ENCODE measurements at regions of chr15 and their contacts with region 1.

Region 1: DNA sequence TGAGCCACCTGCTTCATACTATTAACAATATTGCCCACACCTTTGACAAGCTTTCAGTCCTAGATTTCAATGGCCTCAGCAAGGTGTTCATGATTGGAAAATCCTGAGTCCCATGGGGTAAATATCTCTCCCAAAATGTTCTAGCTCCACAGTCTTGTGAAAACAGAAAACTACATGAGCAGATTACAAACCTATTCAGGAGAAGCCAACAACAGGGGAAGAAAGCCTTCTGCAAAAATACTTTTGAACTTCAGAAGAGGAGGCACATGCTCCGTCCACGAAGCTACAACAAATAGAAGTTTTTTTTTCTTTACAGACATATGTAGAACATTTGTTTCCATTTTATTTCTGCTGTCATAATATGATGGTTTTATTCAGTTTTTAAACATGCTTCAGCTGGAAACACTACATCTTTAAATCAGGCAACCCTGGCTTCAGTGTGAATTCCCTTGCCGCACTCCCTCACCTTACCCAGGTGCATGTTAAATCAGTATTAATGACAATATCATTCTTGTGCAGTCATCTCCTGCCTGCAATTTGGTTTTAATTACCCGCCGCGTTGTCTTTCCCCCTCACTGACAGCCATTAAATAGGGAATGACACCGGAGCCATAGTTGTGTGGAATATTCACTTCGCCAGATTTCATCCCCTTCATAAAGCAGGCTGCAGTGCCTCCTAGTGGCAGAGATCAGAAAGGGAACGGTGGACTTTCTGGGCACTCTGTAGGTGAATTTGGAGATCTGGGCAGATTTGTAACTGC is 725.5 kb upstream of the ARRDC4 start:
- DNase-seq: peak; percentile 30
- ATAC-seq: peak; percentile 90
- H3K4me3 ChIP-seq: no peak overlapping the region
- H3K27ac ChIP-seq: no peak overlapping the region
- H3K4me1 ChIP-seq: no peaks in the 10 kb centered on the region
- H3K27me3 ChIP-seq: no peaks in the 10 kb centered on the region
- CTCF ChIP-seq: peak; percentile 80
- EP300 ChIP-seq: no peak
- POLR2A ChIP-seq: no peak
- RAD21 ChIP-seq: peak; percentile 49

Region 2: DNA sequence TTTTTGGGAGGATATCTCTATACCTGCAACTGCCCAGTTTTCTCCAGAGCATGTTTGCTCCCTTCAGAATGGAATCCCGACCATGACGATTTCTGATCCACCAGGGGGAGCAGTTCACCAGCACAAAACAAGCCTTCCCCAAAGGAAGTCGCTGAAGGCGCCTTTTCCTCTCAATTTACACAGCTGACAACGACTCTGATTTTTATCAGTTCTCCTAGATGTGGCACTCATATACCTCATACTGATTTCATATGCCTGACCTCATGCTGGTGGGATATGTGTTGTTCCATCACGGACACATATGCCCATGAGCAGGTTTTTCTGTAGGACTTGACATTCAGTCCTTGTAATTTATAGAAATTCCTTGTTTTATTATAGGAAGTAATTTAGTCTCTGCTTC is 1975.5 kb before region 1 on chr15:
- CTCF ChIA-PET with region 1: interaction called, 14 read pairs
- POLR2A ChIA-PET with region 1: no interaction called
- in situ Hi-C with region 1: loop called (anchors 10 kb)
- intact Hi-C with region 1: loop called (anchors 1 kb)
- DNase-seq: peak; percentile 35
- ATAC-seq: peak; percentile 82
- H3K4me3 ChIP-seq: no peak overlapping the region
- H3K27ac ChIP-seq: no peak overlapping the region
- H3K4me1 ChIP-seq: no peaks in the 10 kb centered on the region
- H3K27me3 ChIP-seq: no peaks in the 10 kb centered on the region; a peak in 1 of 5 replicates
- CTCF ChIP-seq: peak; percentile 78
- EP300 ChIP-seq: no peak
- POLR2A ChIP-seq: no peak
- RAD21 ChIP-seq: 0 out of 2 replicates have a peak, but pooled peaks have one; percentile 21

Region 3: DNA sequence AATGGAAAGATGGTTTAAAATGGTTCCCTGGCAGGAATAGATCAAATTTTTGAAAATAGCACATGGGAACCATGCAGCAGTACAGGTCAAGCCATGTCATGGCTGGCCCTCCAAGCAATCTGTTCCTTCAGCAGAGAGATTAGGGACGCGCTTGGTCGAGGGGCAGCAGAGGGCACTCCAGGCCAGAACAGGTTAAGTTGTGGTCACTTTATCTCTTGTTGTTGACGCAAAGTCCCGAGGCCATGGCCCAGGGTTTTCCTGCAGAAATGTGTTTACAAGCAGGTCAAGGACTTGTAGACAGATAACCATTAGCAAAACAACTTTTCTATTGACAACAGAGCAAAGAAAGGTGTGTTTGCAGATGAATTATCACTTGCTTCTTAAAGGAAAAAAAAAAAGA is 1474.5 kb before region 1 on chr15:
- CTCF ChIA-PET with region 1: no interaction called
- POLR2A ChIA-PET with region 1: no interaction called
- in situ Hi-C with region 1: no loop called
- intact Hi-C with region 1: loop called (anchors 10 kb)
- DNase-seq: peak; percentile 30
- ATAC-seq: peak; percentile 94
- H3K4me3 ChIP-seq: no peak overlapping the region
- H3K27ac ChIP-seq: no peak overlapping the region
- H3K4me1 ChIP-seq: no peaks in the 10 kb centered on the region
- H3K27me3 ChIP-seq: no peaks in the 10 kb centered on the region
- CTCF ChIP-seq: peak; percentile 76
- EP300 ChIP-seq: peak in 1 of 2 experiments; percentile 23; a peak in 1 of 4 replicates
- POLR2A ChIP-seq: no peak
- RAD21 ChIP-seq: peak; percentile 35; the same call in 1 of the 2 replicates

Region 4: DNA sequence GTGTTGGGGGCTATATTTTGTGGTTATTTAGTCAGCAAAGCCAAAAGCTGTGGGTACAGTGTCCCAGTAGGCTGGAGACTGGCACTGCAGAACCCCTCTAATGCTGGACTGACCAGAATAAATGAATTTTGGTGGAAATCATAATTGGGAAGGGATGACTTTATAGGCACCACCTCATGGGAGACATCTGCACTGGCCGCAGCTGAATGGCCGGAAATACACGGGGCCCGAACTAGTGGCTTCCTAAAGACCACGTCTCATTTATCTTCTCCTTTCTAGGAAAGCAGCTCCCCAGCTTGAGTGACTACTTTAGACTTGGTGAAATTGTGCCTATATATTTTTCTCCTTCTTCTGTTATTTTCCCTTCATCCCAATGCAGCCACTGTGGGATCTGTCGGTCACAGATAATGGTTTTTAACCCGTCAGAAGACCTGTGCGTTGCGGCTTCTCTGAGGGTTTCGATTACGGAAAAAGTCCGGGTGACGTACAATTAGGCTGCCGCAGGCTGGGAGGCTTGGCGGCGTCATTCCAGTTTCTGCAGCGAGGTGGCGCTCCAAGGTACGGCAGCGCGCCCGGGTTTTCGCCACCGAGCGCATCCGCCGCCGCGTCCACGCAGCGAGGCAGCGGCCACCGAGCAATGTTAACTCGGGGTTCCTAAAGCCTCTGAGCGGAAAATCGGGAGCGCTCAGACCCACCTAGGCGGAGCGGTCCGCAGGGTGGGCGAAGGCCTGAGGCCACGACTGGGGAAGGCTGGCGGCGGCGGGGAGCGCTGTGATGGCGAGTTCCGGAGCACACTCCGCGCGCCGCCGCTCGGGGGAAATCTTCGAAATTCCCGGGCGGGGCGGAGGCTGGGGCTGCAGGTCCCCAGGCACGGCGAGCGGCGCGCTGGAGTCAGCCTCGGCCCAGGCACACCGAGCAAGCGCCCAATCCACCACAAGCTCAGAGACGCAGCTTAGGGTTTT is 878.3 kb before region 1 on chr15:
- CTCF ChIA-PET with region 1: interaction called, 5 read pairs
- POLR2A ChIA-PET with region 1: no interaction called
- in situ Hi-C with region 1: no loop called
- intact Hi-C with region 1: loop called (anchors 5 kb)
- DNase-seq: peak; percentile 54
- ATAC-seq: peak; percentile 78
- H3K4me3 ChIP-seq: peak overlapping the region; percentile 63 to 80 (median 70)
- H3K27ac ChIP-seq: no peak overlapping the region
- H3K4me1 ChIP-seq: peaks cover 26% of the 10 kb centered on the region
- H3K27me3 ChIP-seq: no peaks in the 10 kb centered on the region; a peak in 1 of 5 replicates
- CTCF ChIP-seq: peak; percentile 96
- EP300 ChIP-seq: no peak
- POLR2A ChIP-seq: no peak
- RAD21 ChIP-seq: peak; percentile 92

Region 5: DNA sequence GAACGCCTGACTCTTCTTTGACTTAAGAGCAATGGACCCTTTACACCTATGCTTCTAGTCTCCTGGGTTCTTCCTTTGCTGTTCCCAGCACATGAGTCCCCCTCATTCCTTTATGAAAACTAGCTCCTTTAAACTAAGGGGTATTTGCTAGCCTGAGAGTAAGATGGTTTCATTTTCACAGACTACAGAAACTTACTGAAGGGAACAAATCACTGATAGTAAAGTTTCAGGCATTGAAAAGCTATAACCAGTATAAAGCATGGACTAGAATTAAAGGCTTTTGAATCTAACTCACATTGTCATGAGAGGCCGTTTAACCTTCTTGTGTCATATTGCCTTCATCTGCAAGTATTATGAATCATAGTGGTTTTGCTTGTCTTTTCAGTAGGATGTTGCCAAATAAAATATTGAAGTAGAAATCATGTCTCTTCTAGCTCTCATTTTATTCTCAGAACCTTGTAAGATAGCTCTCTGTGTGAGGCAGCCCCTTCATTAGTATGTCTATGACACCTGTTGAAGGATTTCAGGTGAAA is 138.7 kb before region 1 on chr15:
- CTCF ChIA-PET with region 1: no interaction called
- POLR2A ChIA-PET with region 1: no interaction called
- in situ Hi-C with region 1: no loop called
- intact Hi-C with region 1: no loop called
- DNase-seq: no peak
- ATAC-seq: no peak
- H3K4me3 ChIP-seq: no peak overlapping the region
- H3K27ac ChIP-seq: no peak overlapping the region
- H3K4me1 ChIP-seq: no peaks in the 10 kb centered on the region
- H3K27me3 ChIP-seq: no peaks in the 10 kb centered on the region
- CTCF ChIP-seq: no peak
- EP300 ChIP-seq: no peak
- POLR2A ChIP-seq: no peak
- RAD21 ChIP-seq: no peak

Region 6: DNA sequence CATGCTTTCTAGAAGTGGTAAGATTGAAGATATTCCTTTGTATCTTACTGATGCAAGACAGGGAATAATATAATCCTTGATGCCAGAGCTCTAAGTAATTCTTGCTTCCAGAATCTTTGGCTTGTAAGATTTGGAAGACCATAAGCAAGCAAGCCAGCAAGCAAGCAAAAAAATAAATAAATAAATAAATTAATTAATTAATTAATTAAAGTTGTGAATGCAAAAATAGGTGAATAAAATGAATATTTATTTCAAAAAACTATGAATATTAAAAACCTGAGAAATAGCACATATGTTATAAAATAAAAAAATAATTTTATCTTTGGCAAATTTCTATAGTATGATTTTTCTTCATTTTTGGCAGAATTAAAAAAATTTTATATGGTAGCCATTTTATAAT is 24.8 kb before region 1 on chr15:
- CTCF ChIA-PET with region 1: no interaction called
- POLR2A ChIA-PET with region 1: no interaction called
- in situ Hi-C with region 1: no loop called
- intact Hi-C with region 1: no loop called
- DNase-seq: no peak
- ATAC-seq: no peak
- H3K4me3 ChIP-seq: no peak overlapping the region
- H3K27ac ChIP-seq: no peak overlapping the region
- H3K4me1 ChIP-seq: no peaks in the 10 kb centered on the region
- H3K27me3 ChIP-seq: no peaks in the 10 kb centered on the region
- CTCF ChIP-seq: no peak
- EP300 ChIP-seq: no peak
- POLR2A ChIP-seq: no peak
- RAD21 ChIP-seq: no peak

Region 7: GRCh38 chr15:97224191-97224641 is 10.8 kb before region 1 on chr15:
- CTCF ChIA-PET with region 1: no interaction called
- POLR2A ChIA-PET with region 1: no interaction called
- in situ Hi-C with region 1: no loop called
- intact Hi-C with region 1: no loop called
- DNase-seq: no peak
- ATAC-seq: no peak
- H3K4me3 ChIP-seq: no peak overlapping the region
- H3K27ac ChIP-seq: no peak overlapping the region
- H3K4me1 ChIP-seq: no peaks in the 10 kb centered on the region
- H3K27me3 ChIP-seq: no peaks in the 10 kb centered on the region
- CTCF ChIP-seq: no peak
- EP300 ChIP-seq: no peak
- POLR2A ChIP-seq: no peak
- RAD21 ChIP-seq: no peak

Region 8: GRCh38 chr15:97759363-97759762 is 524.3 kb after region 1 on chr15:
- CTCF ChIA-PET with region 1: no interaction called
- POLR2A ChIA-PET with region 1: no interaction called
- in situ Hi-C with region 1: no loop called
- intact Hi-C with region 1: loop called (anchors 5 kb)
- DNase-seq: no peak
- ATAC-seq: no peak
- H3K4me3 ChIP-seq: no peak overlapping the region
- H3K27ac ChIP-seq: no peak overlapping the region
- H3K4me1 ChIP-seq: no peaks in the 10 kb centered on the region
- H3K27me3 ChIP-seq: no peaks in the 10 kb centered on the region; a peak in 1 of 5 replicates
- CTCF ChIP-seq: no peak
- EP300 ChIP-seq: no peak
- POLR2A ChIP-seq: no peak
- RAD21 ChIP-seq: no peak